ENCODE measurements at regions of chr15 and their contacts with region 1.

Region 1: DNA sequence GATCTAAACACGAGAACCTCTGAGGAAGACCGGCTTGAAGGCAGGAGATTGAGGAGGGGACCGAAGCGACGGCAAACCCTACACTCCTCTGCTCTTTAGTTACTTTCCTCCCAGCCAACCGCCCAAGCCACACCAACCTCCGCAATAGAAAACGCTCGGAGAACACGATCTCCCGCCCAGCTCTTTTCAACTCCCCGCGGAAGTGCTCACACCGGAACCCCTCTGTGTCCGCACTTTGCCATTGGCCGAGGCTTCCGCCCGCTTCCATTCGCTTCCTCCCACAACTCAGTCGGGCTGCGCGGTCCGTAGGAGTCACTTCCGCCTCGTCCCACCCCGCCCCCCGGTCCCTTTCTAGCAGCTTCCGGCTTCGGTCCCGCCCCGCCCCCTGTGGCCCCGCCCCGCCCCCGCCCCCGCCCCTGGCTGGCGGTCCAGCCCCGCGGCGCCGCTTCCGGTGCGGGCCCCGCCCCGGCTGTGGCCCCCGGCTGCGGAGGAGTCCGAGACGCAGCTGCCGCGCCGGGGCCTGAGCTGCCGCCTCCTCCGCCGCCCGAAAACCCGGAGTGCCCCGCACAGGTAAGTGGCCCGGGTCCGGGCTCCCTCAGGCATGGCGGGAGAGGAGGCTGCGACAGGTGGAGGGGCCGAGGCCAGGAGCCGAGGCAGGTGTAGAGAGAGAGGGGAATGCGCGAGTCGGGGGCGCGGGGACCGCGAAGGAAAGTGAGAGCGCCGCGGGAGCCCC is at the start of gene ARID3B:
- DNase-seq: peak; percentile 89 to 96 (median 93)
- H3K4me3 ChIP-seq: peak within 1 kb of the TSS; percentile 64 to 79
- H3K4me3 Mint-ChIP-seq: peak within 1 kb of the TSS; percentile 94 to 100 (median 98)
- H3K27ac ChIP-seq: peak within 1 kb of the TSS; percentile 77
- H3K27ac Mint-ChIP-seq: peak within 1 kb of the TSS; percentile 87 to 99 (median 95)
- H3K4me1 ChIP-seq: peaks cover 39% of the 10 kb centered on the region
- H3K4me1 Mint-ChIP-seq: peaks cover 37 to 62% (median 51%) of the 10 kb centered on the region in 4 donors
- H3K27me3 ChIP-seq: no peaks in the 10 kb centered on the region
- H3K27me3 Mint-ChIP-seq: no peaks in the 10 kb centered on the region
- total RNA-seq, gene ARID3B: 32.9 TPM

Region 2: GRCh38 chr15:74396445-74397238 is 144.3 kb before region 1 on chr15:
- CTCF ChIA-PET with region 1: no interaction called
- POLR2A ChIA-PET with region 1: no interaction called
- intact Hi-C with region 1: no loop called
- DNase-seq: no peak
- H3K4me3 ChIP-seq: no peak overlapping the region
- H3K4me3 Mint-ChIP-seq: no peak overlapping the region
- H3K27ac ChIP-seq: no peak overlapping the region
- H3K27ac Mint-ChIP-seq: no peak overlapping the region
- H3K4me1 ChIP-seq: peaks cover 23% of the 10 kb centered on the region
- H3K4me1 Mint-ChIP-seq: peaks cover 9 to 18% (median 16%) of the 10 kb centered on the region in 4 donors
- H3K27me3 ChIP-seq: no peaks in the 10 kb centered on the region
- H3K27me3 Mint-ChIP-seq: no peaks in the 10 kb centered on the region

Region 3: DNA sequence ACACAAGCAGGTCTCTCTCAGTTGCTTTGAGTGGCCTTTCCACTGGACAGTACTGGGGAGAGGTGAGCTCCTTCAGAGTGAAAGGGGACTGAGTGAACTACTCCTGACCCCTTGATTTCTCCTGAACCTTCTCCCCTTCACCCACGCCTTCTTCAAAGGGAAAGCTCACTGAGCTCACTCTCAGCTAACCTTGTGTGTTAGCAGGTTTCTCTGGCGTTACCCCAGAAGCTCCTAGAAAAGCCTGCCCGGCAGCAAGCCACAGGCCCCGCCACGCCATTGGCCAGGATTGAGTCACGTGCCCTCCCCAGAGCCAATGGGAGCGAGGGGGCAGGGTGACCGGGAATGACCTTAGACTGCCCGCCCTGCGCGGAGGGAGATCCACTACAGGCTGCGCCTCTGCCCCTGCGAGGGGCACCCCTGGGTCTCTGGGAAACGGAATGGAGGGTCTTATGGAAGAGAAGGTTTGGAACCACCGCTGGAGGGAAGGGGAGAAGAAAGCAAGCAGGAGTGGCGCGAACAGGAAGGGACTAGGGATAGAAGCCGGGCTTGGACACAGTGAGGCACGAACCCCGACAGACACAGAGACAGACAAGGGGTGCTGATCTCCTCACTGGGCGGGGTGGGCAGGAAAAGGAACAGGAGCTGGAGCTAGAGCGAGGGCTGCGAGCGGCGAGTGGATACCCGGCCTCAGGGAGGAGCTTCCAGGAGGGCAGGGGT is 57.4 kb after region 1 on chr15:
- CTCF ChIA-PET with region 1: interaction called, 6 read pairs
- POLR2A ChIA-PET with region 1: interaction called, 18 read pairs
- intact Hi-C with region 1: loop called (anchors 5 kb)
- DNase-seq: peak; percentile 77 to 87 (median 81)
- H3K4me3 ChIP-seq: peak overlapping the region; percentile 67 to 76
- H3K4me3 Mint-ChIP-seq: peak overlapping the region; percentile 93 to 100 (median 100)
- H3K27ac ChIP-seq: peak overlapping the region; percentile 82
- H3K27ac Mint-ChIP-seq: peak overlapping the region; percentile 88 to 100 (median 99)
- H3K4me1 ChIP-seq: peaks cover 14% of the 10 kb centered on the region
- H3K4me1 Mint-ChIP-seq: peaks cover 7 to 25% (median 16%) of the 10 kb centered on the region in 4 donors
- H3K27me3 ChIP-seq: no peaks in the 10 kb centered on the region
- H3K27me3 Mint-ChIP-seq: no peaks in the 10 kb centered on the region

Region 4: GRCh38 chr15:74695597-74696397 is 154.9 kb after region 1 on chr15 and contains the start of gene EDC3:
- CTCF ChIA-PET with region 1: no interaction called
- POLR2A ChIA-PET with region 1: no interaction called
- intact Hi-C with region 1: no loop called
- DNase-seq: peak; percentile 83 to 90 (median 84)
- H3K4me3 ChIP-seq: peak within 1 kb of the TSS; percentile 80 to 96
- H3K4me3 Mint-ChIP-seq: peak within 1 kb of the TSS; percentile 97 to 100 (median 100)
- H3K27ac ChIP-seq: peak within 1 kb of the TSS; percentile 70
- H3K27ac Mint-ChIP-seq: peak within 1 kb of the TSS; percentile 93 to 100 (median 99)
- H3K4me1 ChIP-seq: peaks cover 31% of the 10 kb centered on the region
- H3K4me1 Mint-ChIP-seq: peaks cover 30 to 49% (median 39%) of the 10 kb centered on the region in 4 donors
- H3K27me3 ChIP-seq: no peaks in the 10 kb centered on the region
- H3K27me3 Mint-ChIP-seq: no peaks in the 10 kb centered on the region
- total RNA-seq, gene EDC3: 40.6 to 40.7 TPM

Measured in CD4-positive, alpha-beta memory T cell (primary cell).